Activated CD8-positive, alpha-beta memory T cell treated with anti-CD3 and anti-CD28 coated beads, Interleukin-2, amount 10 ng/mL, durations not matched to agents 7 days and 5 days (primary cell): ENCODE measurements at regions of chr2 and their contacts with region 1.

Region 1: DNA sequence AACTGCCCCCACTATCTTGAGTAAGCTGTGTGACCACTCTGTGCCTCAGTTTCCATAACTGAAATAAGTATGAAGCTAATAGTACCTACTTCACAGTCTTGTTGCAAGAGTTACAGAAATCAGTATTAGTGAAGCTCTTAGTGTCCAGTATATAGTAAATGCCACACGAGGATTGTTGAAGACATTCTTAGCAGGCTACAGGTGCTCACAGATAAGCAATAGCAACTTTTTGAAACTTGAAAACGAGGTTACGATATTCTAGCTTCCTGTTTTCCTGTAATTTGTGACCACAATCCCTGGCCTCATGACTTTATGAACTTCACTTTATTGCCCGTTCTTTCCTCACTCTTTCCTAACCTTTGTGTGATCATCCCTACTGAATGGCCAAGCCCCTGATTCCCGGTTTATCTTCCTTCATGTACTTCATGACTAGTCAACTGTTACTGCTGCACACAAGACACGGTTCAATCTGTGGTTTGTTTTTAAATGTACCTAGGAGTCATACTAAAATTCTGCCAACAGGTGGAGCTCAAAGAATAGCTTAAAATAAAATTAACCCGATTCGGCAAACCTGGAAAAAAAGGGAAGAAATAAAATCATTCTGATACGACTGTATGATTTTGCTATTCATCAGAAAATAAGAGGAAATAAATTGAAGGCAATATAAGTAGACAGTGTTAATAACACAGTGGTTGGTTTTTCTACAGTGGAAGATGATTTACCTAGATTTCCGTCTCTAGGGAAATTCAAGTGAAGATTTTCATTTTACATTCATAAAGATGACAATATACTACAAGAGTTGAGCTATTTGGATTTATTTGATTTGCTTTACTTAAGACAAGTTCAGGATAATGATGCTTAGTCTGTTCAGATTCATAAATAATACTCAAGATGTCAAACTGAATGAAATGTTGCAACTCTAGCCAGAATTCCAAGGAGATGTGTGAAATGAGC is 38.1 kb upstream of the STAT1 start:
- DNase-seq: no peak
- ATAC-seq: peak; percentile 55
- H3K4me3 Mint-ChIP-seq: no peak overlapping the region
- H3K27ac Mint-ChIP-seq: no peak overlapping the region
- H3K4me1 Mint-ChIP-seq: peaks cover 18% of the 10 kb centered on the region
- H3K27me3 Mint-ChIP-seq: no peaks in the 10 kb centered on the region

Region 2: DNA sequence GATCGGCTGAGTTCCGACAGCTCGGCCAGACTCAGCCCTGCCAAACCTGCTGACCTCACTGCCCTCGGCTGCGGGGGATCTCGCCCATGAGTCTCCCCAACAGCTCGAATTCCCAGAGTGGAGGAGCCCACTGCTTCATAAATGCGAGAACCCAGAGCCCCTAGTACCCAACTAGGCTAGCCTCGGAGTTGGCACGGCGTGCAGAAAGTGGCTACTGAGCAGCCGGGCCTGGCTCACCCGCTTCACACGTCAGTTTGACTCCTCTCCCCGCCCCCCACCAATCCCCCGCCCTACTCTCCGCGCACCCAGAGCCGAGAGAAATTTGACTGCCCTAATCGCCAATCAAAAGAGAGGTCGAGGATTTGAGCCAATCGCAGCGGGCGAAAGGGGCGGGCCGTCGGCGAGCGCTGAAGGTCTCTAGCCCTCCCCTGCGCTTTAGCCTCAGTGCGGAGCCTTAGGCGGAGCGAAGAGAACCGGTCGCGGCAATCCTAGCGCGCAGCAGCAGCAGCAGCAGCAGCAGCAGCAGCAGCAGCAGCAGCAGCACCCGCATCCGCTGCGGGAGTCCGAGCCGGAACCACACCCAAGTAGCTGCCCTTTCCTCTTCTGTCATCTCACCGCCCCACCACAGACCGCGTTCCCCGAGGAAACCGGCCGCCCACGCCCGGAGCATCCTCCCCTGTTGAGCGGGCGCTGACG is 171.6 kb before region 1 on chr2 and contains the start of gene GLS:
- CTCF ChIA-PET with region 1: no interaction called
- DNase-seq: peak; percentile 98
- ATAC-seq: peak; percentile 79
- H3K4me3 Mint-ChIP-seq: peak within 1 kb of the TSS; percentile 96
- H3K27ac Mint-ChIP-seq: peak within 1 kb of the TSS; percentile 99
- H3K4me1 Mint-ChIP-seq: peaks cover 35% of the 10 kb centered on the region
- H3K27me3 Mint-ChIP-seq: peaks cover 2% of the 10 kb centered on the region
- total RNA-seq, gene GLS: 187 to 191 TPM

Region 3: GRCh38 chr2:191038241-191038725 is 13.8 kb before region 1 on chr2:
- CTCF ChIA-PET with region 1: interaction called, 44 read pairs
- DNase-seq: peak; percentile 82
- ATAC-seq: peak; percentile 91
- H3K4me3 Mint-ChIP-seq: peak overlapping the region; percentile 36
- H3K27ac Mint-ChIP-seq: peak overlapping the region; percentile 87
- H3K4me1 Mint-ChIP-seq: peaks cover 38% of the 10 kb centered on the region
- H3K27me3 Mint-ChIP-seq: no peaks in the 10 kb centered on the region

Region 4: GRCh38 chr2:191066197-191066918 is 14.3 kb after region 1 on chr2:
- CTCF ChIA-PET with region 1: interaction called, 22 read pairs
- DNase-seq: no peak
- ATAC-seq: peak; percentile 45
- H3K4me3 Mint-ChIP-seq: peak overlapping the region; percentile 95
- H3K27ac Mint-ChIP-seq: peak overlapping the region; percentile 90
- H3K4me1 Mint-ChIP-seq: peaks cover 76% of the 10 kb centered on the region
- H3K27me3 Mint-ChIP-seq: no peaks in the 10 kb centered on the region

Region 5: GRCh38 chr2:191114403-191114886 is 62.3 kb after region 1 on chr2:
- CTCF ChIA-PET with region 1: interaction called, 10 read pairs
- DNase-seq: peak; percentile 72
- ATAC-seq: peak; percentile 43
- H3K4me3 Mint-ChIP-seq: peak overlapping the region; percentile 71
- H3K27ac Mint-ChIP-seq: peak overlapping the region; percentile 98
- H3K4me1 Mint-ChIP-seq: peaks cover 72% of the 10 kb centered on the region
- H3K27me3 Mint-ChIP-seq: no peaks in the 10 kb centered on the region

Region 6: GRCh38 chr2:191128172-191128910 is 76.2 kb after region 1 on chr2:
- CTCF ChIA-PET with region 1: interaction called, 10 read pairs
- DNase-seq: peak; percentile 57
- ATAC-seq: peak; percentile 88
- H3K4me3 Mint-ChIP-seq: peak overlapping the region; percentile 67
- H3K27ac Mint-ChIP-seq: peak overlapping the region; percentile 90
- H3K4me1 Mint-ChIP-seq: peaks cover 70% of the 10 kb centered on the region
- H3K27me3 Mint-ChIP-seq: no peaks in the 10 kb centered on the region

Region 7: DNA sequence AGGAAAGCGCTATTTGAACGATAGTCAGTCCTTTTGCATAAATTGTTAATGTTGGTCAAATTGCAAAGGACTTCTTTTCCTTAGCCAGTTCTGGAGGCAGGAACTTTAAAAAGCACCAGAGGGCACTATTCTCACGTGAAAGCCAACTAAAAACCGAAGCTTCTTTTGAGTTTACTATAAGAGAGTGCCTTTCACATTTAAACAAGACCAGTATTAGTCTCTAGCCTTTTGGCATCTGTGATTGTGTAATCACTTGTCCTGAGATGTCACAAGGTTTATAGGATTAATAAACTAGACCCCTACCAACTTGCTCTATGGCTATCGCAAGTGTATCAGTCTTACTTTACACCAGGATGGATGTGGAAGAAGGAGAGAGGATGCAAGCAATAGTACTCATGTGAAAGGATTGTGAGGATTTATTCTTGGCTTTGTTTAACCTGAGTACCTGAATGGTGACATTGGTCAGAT is 113.1 kb after region 1 on chr2:
- CTCF ChIA-PET with region 1: interaction called, 369 read pairs
- DNase-seq: peak; percentile 50
- ATAC-seq: peak; percentile 84
- H3K4me3 Mint-ChIP-seq: no peak overlapping the region
- H3K27ac Mint-ChIP-seq: no peak overlapping the region
- H3K4me1 Mint-ChIP-seq: peaks cover 13% of the 10 kb centered on the region
- H3K27me3 Mint-ChIP-seq: peaks cover 4% of the 10 kb centered on the region

Region 8: GRCh38 chr2:191212119-191212518 is 160.0 kb after region 1 on chr2:
- CTCF ChIA-PET with region 1: no interaction called
- DNase-seq: no peak
- ATAC-seq: no peak
- H3K4me3 Mint-ChIP-seq: no peak overlapping the region
- H3K27ac Mint-ChIP-seq: no peak overlapping the region
- H3K4me1 Mint-ChIP-seq: no peaks in the 10 kb centered on the region
- H3K27me3 Mint-ChIP-seq: no peaks in the 10 kb centered on the region

Region 9: DNA sequence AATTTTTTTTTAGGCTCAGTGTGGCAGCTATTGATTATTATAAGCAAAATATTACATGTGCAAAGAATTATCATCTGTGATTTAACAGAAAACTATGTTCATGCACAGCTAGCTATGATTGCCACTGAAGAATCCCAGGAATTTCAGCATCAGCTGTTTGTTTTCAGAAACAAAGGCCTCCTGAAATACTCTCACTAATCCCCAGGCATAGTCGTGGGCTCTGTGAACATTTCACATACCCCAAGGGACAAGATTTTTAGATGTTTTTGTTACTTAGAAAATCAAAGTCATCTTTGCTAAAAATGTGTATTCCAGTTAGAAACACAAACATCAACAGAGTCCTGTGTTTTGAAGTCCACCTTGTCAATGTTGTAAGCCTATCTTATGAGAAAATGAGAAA is 349.2 kb after region 1 on chr2:
- CTCF ChIA-PET with region 1: no interaction called
- DNase-seq: no peak
- ATAC-seq: no peak
- H3K4me3 Mint-ChIP-seq: no peak overlapping the region
- H3K27ac Mint-ChIP-seq: no peak overlapping the region
- H3K4me1 Mint-ChIP-seq: peaks cover 10% of the 10 kb centered on the region
- H3K27me3 Mint-ChIP-seq: peaks cover 4% of the 10 kb centered on the region